Activated T-helper 1 cell treated with anti-CD3 and anti-CD28 coated beads, Interleukin-12 subunit alpha, Interleukin-12 subunit beta, Interleukin-2, Interleukin-4 antibody, amounts not matched to agents 30 ng/mL and 10 ng/mL and 1 ng/mL, durations not matched to agents 14 hours and 24 hours and 36 hours (primary cell): ENCODE measurements at regions of chr2 and their contacts with region 1.

Region 1: DNA sequence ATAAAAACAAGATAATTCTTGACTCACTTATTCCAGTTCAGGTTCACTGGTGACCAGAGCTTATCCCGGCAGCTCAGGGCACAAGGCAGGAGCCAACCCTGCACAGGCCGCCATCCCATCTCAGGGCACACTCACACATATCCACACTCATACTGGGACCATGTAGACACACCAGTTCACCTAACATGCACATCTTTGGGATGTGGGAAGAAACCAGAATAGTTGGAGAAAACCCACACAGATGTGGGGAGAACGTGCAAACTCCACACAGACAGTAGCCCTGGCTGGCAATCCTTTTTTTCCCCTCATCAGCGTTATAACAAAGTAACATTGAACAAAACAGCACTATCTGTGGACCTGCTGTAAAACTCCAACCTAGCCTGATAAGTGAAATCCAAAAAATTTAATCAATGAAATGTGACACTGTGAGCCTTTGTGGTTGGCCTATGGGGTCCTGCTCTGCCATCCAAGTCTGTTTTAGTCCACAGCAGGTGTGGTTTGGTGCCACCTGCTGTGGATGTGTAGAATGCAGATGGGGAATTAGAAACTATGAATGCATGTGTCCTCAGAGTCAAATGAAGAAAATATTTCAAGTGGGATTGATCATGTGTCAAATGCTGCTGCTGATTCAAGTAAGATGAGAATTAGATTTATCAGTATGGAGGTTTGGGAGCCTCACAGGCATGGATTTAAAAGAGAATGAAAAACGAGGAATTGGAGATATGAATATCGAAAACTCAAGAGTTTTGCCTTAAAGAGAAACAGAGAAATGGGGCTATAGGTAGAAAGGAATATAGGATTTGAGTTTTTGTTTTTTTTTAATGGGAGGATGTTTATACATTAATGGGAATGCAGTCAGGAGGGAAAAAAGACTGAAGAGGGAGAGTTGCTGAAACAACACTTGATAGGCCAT is 47.0 kb downstream of the UGP2 start:
- DNase-seq: peak; percentile 12
- H3K4me3 Mint-ChIP-seq: no peak overlapping the region
- H3K27ac Mint-ChIP-seq: peak overlapping the region; percentile 37
- H3K4me1 Mint-ChIP-seq: peaks cover 8% of the 10 kb centered on the region
- H3K27me3 Mint-ChIP-seq: no peaks in the 10 kb centered on the region

Region 2: DNA sequence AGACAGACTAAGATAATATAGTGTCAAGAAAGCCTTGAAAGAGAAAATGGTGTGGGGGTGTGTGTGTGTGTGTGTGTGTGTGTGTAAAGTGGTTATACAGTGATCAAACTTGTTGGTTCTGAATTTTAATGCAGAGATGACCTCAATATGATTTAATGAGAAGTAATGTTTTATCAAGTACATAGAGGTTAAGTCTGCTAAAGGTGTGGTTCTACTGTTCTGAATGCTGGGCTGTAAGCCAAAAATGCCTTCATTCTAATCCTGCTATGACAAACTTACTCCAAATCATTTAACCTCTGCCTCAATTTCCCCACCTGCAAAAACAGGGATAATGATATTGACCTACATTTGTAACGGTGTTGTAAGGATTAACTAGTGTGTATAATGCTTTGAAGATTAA is 388.3 kb before region 1 on chr2:
- intact Hi-C with region 1: no loop called
- DNase-seq: no peak
- H3K4me3 Mint-ChIP-seq: no peak overlapping the region
- H3K27ac Mint-ChIP-seq: no peak overlapping the region
- H3K4me1 Mint-ChIP-seq: no peaks in the 10 kb centered on the region
- H3K27me3 Mint-ChIP-seq: no peaks in the 10 kb centered on the region

Region 3: GRCh38 chr2:63692002-63692606 is 196.6 kb before region 1 on chr2:
- intact Hi-C with region 1: loop called (anchors 1 kb)
- DNase-seq: no peak
- H3K4me3 Mint-ChIP-seq: no peak overlapping the region
- H3K27ac Mint-ChIP-seq: no peak overlapping the region
- H3K4me1 Mint-ChIP-seq: no peaks in the 10 kb centered on the region
- H3K27me3 Mint-ChIP-seq: peaks cover 4% of the 10 kb centered on the region

Region 4: GRCh38 chr2:64114063-64114911 is 225.5 kb after region 1 on chr2:
- intact Hi-C with region 1: no loop called
- DNase-seq: no peak
- H3K4me3 Mint-ChIP-seq: peak overlapping the region; percentile 17
- H3K27ac Mint-ChIP-seq: peak overlapping the region; percentile 59
- H3K4me1 Mint-ChIP-seq: peaks cover 73% of the 10 kb centered on the region
- H3K27me3 Mint-ChIP-seq: no peaks in the 10 kb centered on the region